Aorta (tissue), 5 donors: ENCODE measurements at regions of chr17 and their contacts with region 1.

Region 1: GRCh38 chr17:30586818-30587595 is 109.8 kb downstream of the GOSR1 start:
- DNase-seq: no peak
- ATAC-seq: no peak
- H3K4me3 ChIP-seq: no peak overlapping the region
- H3K27ac ChIP-seq: no peak overlapping the region
- H3K4me1 ChIP-seq: no peaks in the 10 kb centered on the region
- H3K27me3 ChIP-seq: no peaks in the 10 kb centered on the region

Region 2: DNA sequence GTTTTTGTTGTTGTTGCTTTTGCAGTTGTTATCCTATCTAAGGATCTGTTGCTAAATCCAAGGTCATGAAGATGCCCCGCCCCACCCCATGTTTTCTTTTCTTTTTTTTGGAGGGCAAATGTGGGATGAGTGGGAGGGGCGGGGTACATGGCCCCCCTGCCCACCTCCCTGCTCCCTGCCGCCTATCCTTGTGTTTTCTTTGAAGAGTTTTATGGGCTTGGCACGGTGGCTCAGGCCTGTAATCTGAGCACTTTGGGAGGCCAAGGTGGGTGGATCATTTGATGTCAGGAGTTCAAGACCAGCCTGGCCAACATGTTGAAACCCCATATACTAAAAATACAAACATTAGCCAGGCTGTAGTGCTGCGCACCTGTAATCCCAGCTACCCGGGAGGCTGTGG is 128.6 kb before region 1 on chr17:
- intact Hi-C with region 1: no loop called
- DNase-seq: no peak
- ATAC-seq: no peak
- H3K4me3 ChIP-seq: no peak overlapping the region
- H3K27ac ChIP-seq: no peak overlapping the region
- H3K4me1 ChIP-seq: peaks cover 0 to 2% of the 10 kb centered on the region in 2 donors
- H3K27me3 ChIP-seq: no peaks in the 10 kb centered on the region

Region 3: DNA sequence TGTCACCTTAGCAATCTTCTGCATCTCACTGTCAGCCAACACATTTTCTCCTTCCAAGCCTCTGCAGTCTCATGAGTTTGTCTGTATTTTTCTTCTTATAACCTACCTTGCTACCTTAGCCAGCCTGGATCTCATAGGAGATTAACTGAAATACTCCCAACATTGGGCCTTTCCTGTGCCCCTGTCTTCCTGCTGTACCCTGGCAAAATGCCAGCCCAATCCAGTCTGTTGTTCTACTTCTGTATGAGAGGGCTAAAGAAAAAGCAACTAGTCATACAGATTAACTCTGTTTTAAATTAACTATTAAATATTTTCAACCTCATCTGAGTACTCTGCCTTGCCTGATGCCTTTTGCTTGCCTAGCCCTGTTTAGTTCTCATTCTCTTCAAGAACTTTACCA is 91.4 kb before region 1 on chr17:
- intact Hi-C with region 1: no loop called
- DNase-seq: no peak
- ATAC-seq: no peak
- H3K4me3 ChIP-seq: no peak overlapping the region
- H3K27ac ChIP-seq: no peak overlapping the region
- H3K4me1 ChIP-seq: no peaks in the 10 kb centered on the region
- H3K27me3 ChIP-seq: no peaks in the 10 kb centered on the region

Region 4: GRCh38 chr17:30519707-30520106 is 67.3 kb before region 1 on chr17:
- intact Hi-C with region 1: loop called in 1 of 2 experiments (anchors 10 kb)
- DNase-seq: no peak
- ATAC-seq: peak; percentile 72
- H3K4me3 ChIP-seq: no peak overlapping the region
- H3K27ac ChIP-seq: peak overlapping the region; percentile 57 to 67
- H3K4me1 ChIP-seq: peaks cover 3 to 4% of the 10 kb centered on the region in 2 donors
- H3K27me3 ChIP-seq: no peaks in the 10 kb centered on the region

Region 5: DNA sequence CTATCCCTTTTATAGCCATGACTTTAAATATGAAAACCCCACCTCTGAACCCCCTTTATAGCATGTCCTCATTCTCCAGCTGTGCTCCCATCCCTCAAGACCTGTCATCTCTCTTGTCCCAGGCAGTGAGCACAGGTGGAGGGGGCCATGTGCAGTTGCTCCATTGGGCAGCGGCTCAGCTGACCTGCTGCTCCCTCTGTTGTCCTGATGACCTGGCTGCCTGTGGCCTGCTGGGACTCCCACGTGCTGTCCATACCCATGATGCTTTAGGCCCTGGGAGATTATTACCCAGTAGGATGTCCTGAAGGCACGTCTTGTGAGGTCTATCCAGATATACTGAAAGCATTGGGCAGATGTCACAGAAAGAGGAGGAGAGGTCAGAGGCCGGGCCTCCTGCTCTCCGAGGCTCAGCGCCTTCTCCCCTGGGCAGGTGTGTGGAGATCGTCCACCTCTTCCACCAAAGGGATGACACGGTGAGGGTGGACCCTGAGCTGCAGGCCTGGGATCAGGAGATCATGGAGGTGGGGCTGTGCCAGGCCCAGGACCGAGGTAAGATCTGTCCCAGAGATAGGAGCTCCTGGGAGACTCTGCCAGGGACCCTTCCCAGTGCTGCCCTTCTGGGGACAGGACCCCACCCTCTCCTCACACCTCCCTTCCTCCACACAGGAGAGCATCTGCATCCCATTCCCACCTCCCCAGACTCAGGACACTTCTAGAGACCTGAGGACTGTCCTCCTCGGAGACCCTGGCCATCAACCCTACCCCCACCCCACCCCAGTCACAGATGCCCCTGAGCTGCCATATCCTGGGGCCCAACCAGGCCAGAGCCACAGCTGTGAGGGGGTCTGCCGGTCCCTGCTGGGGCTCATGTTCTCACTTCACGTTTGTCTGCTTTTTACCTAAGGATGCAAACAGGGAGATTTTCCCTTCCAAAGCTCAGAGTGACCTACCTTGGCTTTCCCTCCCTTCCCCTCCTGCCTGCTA is 51.8 kb before region 1 on chr17:
- intact Hi-C with region 1: no loop called
- DNase-seq: peak in 1 of 2 donors; percentile 42
- ATAC-seq: no peak
- H3K4me3 ChIP-seq: no peak overlapping the region
- H3K27ac ChIP-seq: no peak overlapping the region
- H3K4me1 ChIP-seq: no peaks in the 10 kb centered on the region
- H3K27me3 ChIP-seq: no peaks in the 10 kb centered on the region